ENCODE measurements at regions of chr22 and their contacts with region 1.

Region 1: DNA sequence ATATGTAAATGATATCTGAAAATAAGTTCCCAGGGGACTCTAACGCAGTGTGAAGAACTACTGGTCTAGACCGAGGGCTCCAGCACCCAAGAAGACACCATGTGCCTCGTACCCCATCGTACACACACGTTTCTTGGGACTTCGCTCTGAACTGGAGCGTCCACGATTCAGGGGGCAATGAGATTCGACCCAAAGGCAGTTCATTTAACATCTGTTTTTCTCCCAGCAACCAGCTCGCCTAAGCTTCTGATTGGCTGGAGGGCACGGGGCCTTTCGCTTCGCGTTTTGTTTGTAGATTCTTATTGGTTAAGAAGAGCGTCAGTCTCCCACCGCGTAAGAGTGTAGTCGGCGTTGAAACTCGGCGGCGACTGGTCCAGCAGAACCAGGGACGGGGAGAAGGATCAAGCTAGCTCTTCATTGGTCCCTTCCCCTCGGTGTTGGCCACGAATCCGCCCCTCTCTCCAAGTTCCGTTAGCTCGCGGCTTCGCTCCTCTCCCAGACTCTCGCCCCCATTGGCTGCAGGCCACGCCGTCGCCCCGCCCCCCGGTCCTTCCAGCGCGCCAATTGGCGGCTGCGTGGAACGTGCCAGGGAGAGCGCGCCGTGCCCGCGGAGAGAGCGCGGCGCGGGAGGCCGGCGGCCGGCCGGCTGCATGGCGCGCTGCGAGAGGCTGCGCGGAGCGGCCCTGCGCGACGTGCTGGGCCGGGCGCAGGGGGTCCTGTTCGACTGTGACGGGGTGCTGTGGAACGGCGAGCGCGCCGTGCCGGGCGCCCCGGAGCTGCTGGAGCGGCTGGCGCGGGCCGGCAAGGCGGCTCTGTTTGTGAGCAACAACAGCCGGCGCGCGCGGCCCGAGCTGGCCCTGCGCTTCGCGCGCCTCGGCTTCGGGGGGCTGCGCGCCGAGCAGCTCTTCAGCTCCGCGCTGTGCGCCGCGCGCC is at the start of gene PDXP:
- DNase-seq: peak; percentile 99
- H3K4me3 Mint-ChIP-seq: peak within 1 kb of the TSS; percentile 85
- H3K27ac Mint-ChIP-seq: peak within 1 kb of the TSS; percentile 87
- H3K4me1 Mint-ChIP-seq: peaks cover 42% of the 10 kb centered on the region
- H3K27me3 Mint-ChIP-seq: no peaks in the 10 kb centered on the region
- total RNA-seq, gene PDXP: 21.5 to 21.8 TPM

Region 2: GRCh38 chr22:37633625-37634416 is 24.6 kb before region 1 on chr22:
- CTCF ChIA-PET with region 1: interaction called, 11 read pairs
- POLR2A ChIA-PET with region 1: no interaction called
- DNase-seq: peak; percentile 62
- H3K4me3 Mint-ChIP-seq: peak overlapping the region; percentile 41
- H3K27ac Mint-ChIP-seq: peak overlapping the region; percentile 96
- H3K4me1 Mint-ChIP-seq: peaks cover 77% of the 10 kb centered on the region
- H3K27me3 Mint-ChIP-seq: no peaks in the 10 kb centered on the region

Measured in activated CD4-positive, alpha-beta T cell treated with anti-CD3 and anti-CD28 coated beads, Interleukin-2, amount 10 ng/mL, durations not matched to agents 7 days and 5 days (primary cell).